Activated naive CD4-positive, alpha-beta T cell treated with anti-CD3 and anti-CD28 coated beads for 36 hours (primary cell): ENCODE measurements at regions of chr1 and their contacts with region 1.

Region 1: DNA sequence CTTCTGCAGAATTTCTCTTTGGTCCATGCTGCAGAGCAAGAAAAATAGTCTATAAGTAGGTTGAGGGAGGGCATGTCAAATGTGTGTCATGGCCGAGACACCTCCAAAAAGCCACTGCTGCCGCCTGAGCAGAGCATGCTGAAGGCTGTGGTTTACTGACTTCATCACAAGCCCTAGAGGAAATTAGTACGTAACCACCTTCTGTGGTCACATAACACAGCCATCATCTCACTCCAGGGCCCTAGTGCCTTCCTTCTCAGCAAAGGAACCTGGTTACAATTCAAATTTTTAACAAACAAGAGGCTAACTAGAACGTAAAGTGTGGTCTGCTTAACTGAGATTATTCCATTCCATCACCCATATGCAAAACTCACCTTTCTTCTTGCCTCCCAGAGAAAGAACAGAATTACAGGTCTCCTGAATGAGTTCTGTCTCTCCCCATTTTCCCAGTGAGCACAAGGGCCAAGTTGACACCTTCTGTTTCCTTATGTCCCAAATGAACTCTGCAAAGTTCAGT is at the start of gene PTPN22:
- DNase-seq: peak; percentile 90
- H3K4me3 Mint-ChIP-seq: peak within 1 kb of the TSS; percentile 85
- H3K27ac Mint-ChIP-seq: peak within 1 kb of the TSS; percentile 98
- H3K4me1 Mint-ChIP-seq: peaks cover 64% of the 10 kb centered on the region
- H3K27me3 Mint-ChIP-seq: no peaks in the 10 kb centered on the region
- total RNA-seq, gene PTPN22: 43.9 to 50.9 TPM

Region 2: DNA sequence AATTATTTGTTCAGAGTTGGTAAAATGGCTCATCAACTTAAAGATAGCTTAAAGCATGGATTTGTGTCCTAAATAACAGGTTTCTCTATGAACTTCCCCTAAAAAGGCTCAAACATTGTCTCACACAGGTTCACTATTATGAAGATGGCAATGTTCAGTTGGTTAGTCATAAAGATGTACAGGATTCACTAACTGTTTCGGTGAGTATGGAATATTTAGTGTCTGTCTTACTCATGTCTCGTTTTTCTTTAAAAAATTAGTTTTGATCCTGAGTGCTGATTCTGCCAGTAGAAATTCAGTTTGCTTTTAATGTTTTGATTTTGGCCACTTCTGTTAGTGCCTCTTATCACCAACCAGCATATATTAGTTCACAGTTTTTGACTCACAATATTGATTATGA is 1204.7 kb before region 1 on chr1:
- CTCF ChIA-PET with region 1: no interaction called
- intact Hi-C with region 1: loop called (anchors 5 kb)
- DNase-seq: no peak
- H3K4me3 Mint-ChIP-seq: no peak overlapping the region
- H3K27ac Mint-ChIP-seq: peak overlapping the region; percentile 67
- H3K4me1 Mint-ChIP-seq: peaks cover 33% of the 10 kb centered on the region
- H3K27me3 Mint-ChIP-seq: no peaks in the 10 kb centered on the region

Region 3: GRCh38 chr1:113756461-113756860 is 115.2 kb before region 1 on chr1:
- CTCF ChIA-PET with region 1: no interaction called
- intact Hi-C with region 1: no loop called
- DNase-seq: no peak
- H3K4me3 Mint-ChIP-seq: no peak overlapping the region
- H3K27ac Mint-ChIP-seq: no peak overlapping the region
- H3K4me1 Mint-ChIP-seq: peaks cover 15% of the 10 kb centered on the region
- H3K27me3 Mint-ChIP-seq: no peaks in the 10 kb centered on the region

Region 4: DNA sequence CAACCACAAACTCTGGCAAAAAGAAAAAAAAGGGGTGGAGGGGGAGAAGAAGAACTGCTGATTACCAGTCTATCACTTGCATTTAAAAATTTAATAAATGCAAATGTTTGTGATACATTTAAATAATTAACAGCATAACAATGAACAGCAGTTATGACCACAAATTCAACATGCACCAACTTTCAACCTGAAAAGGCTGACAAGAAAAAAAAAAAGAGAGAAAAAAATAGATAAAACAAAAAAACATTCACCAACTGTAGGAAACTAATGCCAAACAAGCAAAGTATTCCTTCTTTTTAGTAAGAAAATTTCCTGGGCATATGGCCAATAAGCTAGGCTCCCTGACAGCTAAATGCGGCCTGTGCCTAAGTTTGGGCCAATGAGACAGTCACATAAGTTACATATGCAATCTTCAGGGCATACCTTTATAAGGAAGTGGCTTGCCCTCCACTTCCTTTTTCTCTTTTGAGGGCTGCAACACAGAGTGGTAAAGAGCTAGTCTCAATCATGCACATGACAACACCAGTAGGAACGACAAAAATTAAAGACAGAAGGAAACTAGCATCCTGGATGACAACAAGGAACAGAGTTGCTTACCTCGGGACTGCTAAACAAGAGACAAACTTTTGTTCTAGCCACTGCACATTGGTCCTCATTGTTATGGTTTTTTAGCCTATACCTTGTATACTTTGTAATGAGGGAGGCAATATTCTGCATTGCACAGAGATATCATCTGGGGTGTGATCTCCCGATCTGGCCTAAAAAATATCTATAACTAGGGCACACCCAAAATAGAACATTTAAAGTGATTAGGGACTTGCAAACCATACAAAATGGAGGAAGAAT is 88.2 kb before region 1 on chr1:
- CTCF ChIA-PET with region 1: no interaction called
- intact Hi-C with region 1: loop called (anchors 1 kb)
- DNase-seq: peak; percentile 60
- H3K4me3 Mint-ChIP-seq: peak overlapping the region; percentile 36
- H3K27ac Mint-ChIP-seq: peak overlapping the region; percentile 95
- H3K4me1 Mint-ChIP-seq: peaks cover 41% of the 10 kb centered on the region
- H3K27me3 Mint-ChIP-seq: no peaks in the 10 kb centered on the region

Region 5: DNA sequence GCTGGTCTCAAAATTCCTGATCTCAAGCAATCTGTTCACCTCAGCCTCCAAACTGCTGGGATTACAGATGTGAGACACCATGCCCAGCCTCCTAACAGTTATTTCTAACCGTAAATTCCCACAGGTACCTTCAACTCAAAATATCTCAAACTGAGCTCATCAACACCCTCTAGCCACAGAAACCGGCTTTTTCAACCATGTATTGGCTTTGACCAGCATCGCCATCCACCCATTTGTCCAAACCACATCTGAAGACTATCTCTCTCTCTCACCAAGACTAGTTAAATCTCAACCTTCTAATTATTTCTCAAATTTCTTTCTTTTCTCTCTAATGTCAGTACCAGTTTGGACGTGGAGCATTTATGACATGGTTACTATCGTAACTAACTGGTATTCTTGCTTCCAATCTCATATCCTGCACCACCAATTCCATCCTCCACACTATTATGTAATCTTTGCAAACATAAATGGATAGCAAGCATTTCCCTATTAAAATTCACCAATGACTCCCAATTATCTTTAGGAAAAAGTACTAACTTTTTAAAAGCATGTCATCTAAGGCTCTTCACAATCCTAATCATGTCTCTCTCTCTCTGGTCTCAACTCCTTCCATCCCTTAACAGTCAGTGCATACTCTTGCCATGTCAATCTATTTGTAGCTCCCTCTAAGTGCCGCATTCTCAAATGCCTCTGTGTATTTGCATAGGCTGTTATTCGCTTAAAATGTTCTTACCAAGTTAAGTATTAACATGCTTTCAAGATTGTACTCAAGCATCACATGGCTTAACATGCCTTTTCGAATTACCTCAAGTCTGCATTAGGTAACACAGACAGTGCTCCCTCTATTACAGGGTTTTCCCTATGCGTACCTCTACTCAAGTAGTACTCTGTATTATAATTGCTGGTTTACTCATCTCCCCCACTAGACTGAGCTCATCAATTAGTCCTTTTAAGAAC is 77.5 kb before region 1 on chr1:
- CTCF ChIA-PET with region 1: no interaction called
- intact Hi-C with region 1: no loop called
- DNase-seq: no peak
- H3K4me3 Mint-ChIP-seq: no peak overlapping the region
- H3K27ac Mint-ChIP-seq: no peak overlapping the region
- H3K4me1 Mint-ChIP-seq: peaks cover 62% of the 10 kb centered on the region
- H3K27me3 Mint-ChIP-seq: no peaks in the 10 kb centered on the region

Region 6: GRCh38 chr1:113835642-113836307 is 35.9 kb before region 1 on chr1:
- CTCF ChIA-PET with region 1: interaction called, 18 read pairs
- intact Hi-C with region 1: loop called (anchors 1 kb)
- DNase-seq: peak; percentile 35
- H3K4me3 Mint-ChIP-seq: no peak overlapping the region
- H3K27ac Mint-ChIP-seq: no peak overlapping the region
- H3K4me1 Mint-ChIP-seq: peaks cover 3% of the 10 kb centered on the region
- H3K27me3 Mint-ChIP-seq: no peaks in the 10 kb centered on the region

Region 7: GRCh38 chr1:113904674-113905434 is 33.2 kb after region 1 on chr1 and contains the starts of genes AP4B1 and DCLRE1B:
- CTCF ChIA-PET with region 1: interaction called, 13 read pairs
- intact Hi-C with region 1: loop called (anchors 1 kb)
- DNase-seq: peak; percentile 99
- H3K4me3 Mint-ChIP-seq: peak within 1 kb of the TSS; percentile 99
- H3K27ac Mint-ChIP-seq: peak within 1 kb of the TSS; percentile 97
- H3K4me1 Mint-ChIP-seq: peaks cover 51% of the 10 kb centered on the region
- H3K27me3 Mint-ChIP-seq: no peaks in the 10 kb centered on the region
- total RNA-seq, gene AP4B1: 35.7 to 40.2 TPM
- total RNA-seq, gene DCLRE1B: 17.7 to 18.3 TPM

Region 8: GRCh38 chr1:115062542-115063011 is 1190.9 kb after region 1 on chr1:
- CTCF ChIA-PET with region 1: no interaction called
- intact Hi-C with region 1: loop called (anchors 2 kb)
- DNase-seq: peak; percentile 96
- H3K4me3 Mint-ChIP-seq: no peak overlapping the region
- H3K27ac Mint-ChIP-seq: peak overlapping the region; percentile 74
- H3K4me1 Mint-ChIP-seq: peaks cover 41% of the 10 kb centered on the region
- H3K27me3 Mint-ChIP-seq: no peaks in the 10 kb centered on the region